ENCODE measurements at regions of chr4 and their contacts with region 1.

Region 1: GRCh38 chr4:153344131-153345010 is at the start of gene MND1:
- DNase-seq: peak; percentile 81
- ATAC-seq: peak; percentile 69
- H3K4me3 ChIP-seq: peak within 1 kb of the TSS; percentile 87
- H3K27ac ChIP-seq: peak within 1 kb of the TSS; percentile 51
- H3K4me1 ChIP-seq: peaks cover 36% of the 10 kb centered on the region
- H3K27me3 ChIP-seq: no peaks in the 10 kb centered on the region
- CTCF ChIP-seq: peak; percentile 78
- total RNA-seq, gene MND1: 7.9 and 8.9 TPM in 2 replicates

Region 2: GRCh38 chr4:153432968-153433753 is 88.8 kb after region 1 on chr4:
- CTCF ChIA-PET with region 1: interaction called, 5 read pairs
- POLR2A ChIA-PET with region 1: no interaction called
- intact Hi-C with region 1: loop called (anchors 2 kb)
- DNase-seq: peak; percentile 91
- ATAC-seq: peak; percentile 91
- H3K4me3 ChIP-seq: no peak overlapping the region
- H3K27ac ChIP-seq: peak overlapping the region; percentile 51
- H3K4me1 ChIP-seq: peaks cover 7% of the 10 kb centered on the region
- H3K27me3 ChIP-seq: no peaks in the 10 kb centered on the region
- CTCF ChIP-seq: peak; percentile 85

Region 3: GRCh38 chr4:153466081-153466948 is 121.9 kb after region 1 on chr4 and contains the start of gene TMEM131L:
- CTCF ChIA-PET with region 1: interaction called, 4 read pairs
- POLR2A ChIA-PET with region 1: no interaction called
- intact Hi-C with region 1: loop called (anchors 10 kb)
- DNase-seq: peak; percentile 53
- ATAC-seq: peak; percentile 73
- H3K4me3 ChIP-seq: peak within 1 kb of the TSS; percentile 90
- H3K27ac ChIP-seq: peak within 1 kb of the TSS; percentile 88
- H3K4me1 ChIP-seq: peaks cover 20% of the 10 kb centered on the region
- H3K27me3 ChIP-seq: no peaks in the 10 kb centered on the region
- CTCF ChIP-seq: no peak
- total RNA-seq, gene TMEM131L: 7.7 and 10.3 TPM in 2 replicates

Region 4: GRCh38 chr4:153643406-153644383 is 299.3 kb after region 1 on chr4:
- CTCF ChIA-PET with region 1: no interaction called
- POLR2A ChIA-PET with region 1: no interaction called
- intact Hi-C with region 1: loop called (anchors 5 kb)
- DNase-seq: peak; percentile 60
- ATAC-seq: peak; percentile 85
- H3K4me3 ChIP-seq: no peak overlapping the region
- H3K27ac ChIP-seq: no peak overlapping the region
- H3K4me1 ChIP-seq: no peaks in the 10 kb centered on the region
- H3K27me3 ChIP-seq: no peaks in the 10 kb centered on the region
- CTCF ChIP-seq: peak; percentile 64

Region 5: DNA sequence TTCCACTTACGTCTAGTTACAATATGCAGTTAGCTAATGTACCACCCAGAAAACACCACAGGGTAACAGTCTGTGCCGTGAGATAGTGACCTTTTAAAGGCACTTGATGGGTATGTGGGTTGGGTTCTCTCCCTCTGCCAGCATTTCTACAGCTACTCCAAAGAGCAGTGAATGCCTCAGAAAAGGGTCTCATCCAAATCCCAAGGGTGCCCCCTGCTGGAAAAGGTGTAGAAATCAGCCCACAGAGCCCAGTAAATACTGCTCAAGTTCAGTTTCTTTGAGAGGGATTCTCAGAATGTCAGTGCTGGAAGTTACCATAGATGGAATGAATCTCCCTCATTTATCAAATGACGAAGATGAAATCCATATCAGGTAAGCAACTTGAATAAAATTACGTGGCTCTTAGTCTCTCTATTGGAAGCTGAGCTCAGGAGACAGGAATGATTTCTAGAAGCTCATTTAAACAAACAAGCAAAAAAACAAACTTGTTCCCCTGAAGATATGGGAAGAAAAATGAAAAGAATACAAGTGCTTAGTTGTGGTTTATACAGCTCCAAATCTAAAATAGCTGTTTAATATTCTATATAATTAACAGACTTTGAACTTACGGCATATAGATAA is 405.9 kb after region 1 on chr4:
- CTCF ChIA-PET with region 1: no interaction called
- POLR2A ChIA-PET with region 1: no interaction called
- intact Hi-C with region 1: loop called (anchors 5 kb)
- DNase-seq: peak; percentile 77
- ATAC-seq: peak; percentile 88
- H3K4me3 ChIP-seq: no peak overlapping the region
- H3K27ac ChIP-seq: no peak overlapping the region
- H3K4me1 ChIP-seq: peaks cover 7% of the 10 kb centered on the region; the same call in 1 of the 2 replicates
- H3K27me3 ChIP-seq: no peaks in the 10 kb centered on the region
- CTCF ChIP-seq: peak; percentile 72

Region 6: DNA sequence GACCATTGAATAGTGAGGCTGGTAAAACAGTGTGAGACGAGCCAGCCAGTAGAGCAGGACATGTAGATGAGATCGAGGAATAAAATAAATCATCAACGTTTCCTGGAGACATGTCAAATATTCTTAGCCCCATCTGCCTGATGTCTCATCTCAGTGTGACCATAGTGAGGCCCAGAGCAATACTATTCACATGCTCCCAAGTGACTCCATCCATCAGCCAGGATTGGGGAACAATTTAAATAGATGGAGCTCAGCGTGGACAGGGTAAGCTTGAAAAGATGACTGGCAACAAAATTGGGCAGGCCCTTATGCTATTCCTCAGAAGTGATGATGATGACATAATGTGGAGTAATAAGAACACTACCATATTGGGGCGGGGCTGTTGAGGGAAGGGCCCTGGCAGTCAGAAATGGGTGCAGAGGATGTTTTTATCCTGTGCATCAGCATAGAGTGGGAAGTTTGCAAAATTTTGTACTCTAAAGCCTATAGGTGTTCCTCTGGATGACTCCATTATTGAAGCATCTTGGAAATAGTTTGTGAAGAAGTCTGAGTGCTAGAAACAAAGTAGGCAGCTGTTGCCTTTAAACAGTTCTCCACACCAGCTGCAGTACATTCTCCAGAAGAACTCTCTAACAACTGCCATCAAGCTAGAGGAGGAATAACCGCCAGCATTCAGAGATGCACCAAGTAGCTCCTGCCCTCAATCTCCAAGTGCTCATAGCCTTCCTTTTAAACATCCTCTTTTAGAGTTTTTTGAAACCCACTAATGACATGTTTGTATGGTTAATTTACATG is 814.2 kb after region 1 on chr4:
- CTCF ChIA-PET with region 1: no interaction called
- POLR2A ChIA-PET with region 1: interaction called, 10 read pairs
- intact Hi-C with region 1: no loop called
- DNase-seq: no peak
- ATAC-seq: no peak
- H3K4me3 ChIP-seq: no peak overlapping the region
- H3K27ac ChIP-seq: no peak overlapping the region
- H3K4me1 ChIP-seq: no peaks in the 10 kb centered on the region
- H3K27me3 ChIP-seq: peaks cover 12% of the 10 kb centered on the region
- CTCF ChIP-seq: no peak

Measured in PC-3 (cell line).